MCF 10A (cell line): ENCODE measurements at regions of chr1 and their contacts with region 1.

Region 1: GRCh38 chr1:2141036-2141435 is 53.5 kb downstream of the FAAP20 start:
- DNase-seq: no peak
- H3K4me3 Mint-ChIP-seq: no peak overlapping the region
- H3K27ac Mint-ChIP-seq: no peak overlapping the region
- H3K4me1 Mint-ChIP-seq: no peaks in the 10 kb centered on the region
- H3K27me3 Mint-ChIP-seq: no peaks in the 10 kb centered on the region
- CTCF ChIP-seq: no peak

Region 2: DNA sequence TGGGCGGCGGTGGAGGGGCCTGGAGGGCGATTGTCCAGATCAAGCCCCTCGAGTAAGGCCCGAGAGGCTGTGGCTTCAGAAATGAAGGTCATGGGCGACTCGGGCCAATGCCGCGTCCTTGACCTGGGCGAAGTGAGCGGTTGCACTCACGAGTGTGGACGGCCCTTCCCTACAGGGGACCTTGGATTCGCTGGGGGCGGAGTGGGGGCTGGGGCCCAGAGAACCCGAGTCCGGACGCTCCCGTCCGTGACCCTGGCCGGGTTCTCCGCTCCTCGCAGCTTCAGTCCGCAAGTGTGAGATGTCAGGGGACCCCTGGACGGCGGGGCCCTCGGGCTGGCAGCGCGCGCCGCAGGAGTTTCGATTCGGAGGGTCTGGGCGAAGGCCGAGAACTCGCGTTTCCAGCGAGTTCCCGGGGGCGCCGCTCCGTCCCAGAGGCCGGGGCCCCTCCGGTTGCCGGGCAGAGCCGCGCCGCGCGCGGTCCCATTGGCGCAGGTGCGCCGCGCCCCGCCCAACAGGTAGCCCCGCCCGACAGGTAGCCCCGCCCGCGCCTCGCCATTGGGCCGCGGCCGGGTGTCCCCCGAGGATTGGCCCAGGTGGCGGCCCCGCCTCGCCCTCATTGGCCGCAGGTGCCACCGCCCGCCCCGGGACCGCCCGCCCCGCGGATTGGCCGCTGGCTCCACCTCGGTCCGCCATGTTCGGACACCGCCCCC is 91.2 kb before region 1 on chr1 and contains the start of gene PRKCZ:
- CTCF ChIA-PET with region 1: interaction called, 7 read pairs
- POLR2A ChIA-PET with region 1: no interaction called
- intact Hi-C with region 1: loop called (anchors 2 kb)
- DNase-seq: peak; percentile 90
- H3K4me3 Mint-ChIP-seq: peak within 1 kb of the TSS; percentile 72
- H3K27ac Mint-ChIP-seq: no peak within 1 kb of the TSS
- H3K4me1 Mint-ChIP-seq: peaks cover 11% of the 10 kb centered on the region
- H3K27me3 Mint-ChIP-seq: no peaks in the 10 kb centered on the region
- CTCF ChIP-seq: no peak
- total RNA-seq, gene PRKCZ: 20.3 and 24.9 TPM in 2 replicates

Region 3: GRCh38 chr1:2163205-2163604 is 22.2 kb after region 1 on chr1:
- CTCF ChIA-PET with region 1: interaction called, 14 read pairs
- POLR2A ChIA-PET with region 1: no interaction called
- intact Hi-C with region 1: no loop called
- DNase-seq: no peak
- H3K4me3 Mint-ChIP-seq: no peak overlapping the region
- H3K27ac Mint-ChIP-seq: no peak overlapping the region
- H3K4me1 Mint-ChIP-seq: no peaks in the 10 kb centered on the region
- H3K27me3 Mint-ChIP-seq: no peaks in the 10 kb centered on the region
- CTCF ChIP-seq: no peak

Region 4: DNA sequence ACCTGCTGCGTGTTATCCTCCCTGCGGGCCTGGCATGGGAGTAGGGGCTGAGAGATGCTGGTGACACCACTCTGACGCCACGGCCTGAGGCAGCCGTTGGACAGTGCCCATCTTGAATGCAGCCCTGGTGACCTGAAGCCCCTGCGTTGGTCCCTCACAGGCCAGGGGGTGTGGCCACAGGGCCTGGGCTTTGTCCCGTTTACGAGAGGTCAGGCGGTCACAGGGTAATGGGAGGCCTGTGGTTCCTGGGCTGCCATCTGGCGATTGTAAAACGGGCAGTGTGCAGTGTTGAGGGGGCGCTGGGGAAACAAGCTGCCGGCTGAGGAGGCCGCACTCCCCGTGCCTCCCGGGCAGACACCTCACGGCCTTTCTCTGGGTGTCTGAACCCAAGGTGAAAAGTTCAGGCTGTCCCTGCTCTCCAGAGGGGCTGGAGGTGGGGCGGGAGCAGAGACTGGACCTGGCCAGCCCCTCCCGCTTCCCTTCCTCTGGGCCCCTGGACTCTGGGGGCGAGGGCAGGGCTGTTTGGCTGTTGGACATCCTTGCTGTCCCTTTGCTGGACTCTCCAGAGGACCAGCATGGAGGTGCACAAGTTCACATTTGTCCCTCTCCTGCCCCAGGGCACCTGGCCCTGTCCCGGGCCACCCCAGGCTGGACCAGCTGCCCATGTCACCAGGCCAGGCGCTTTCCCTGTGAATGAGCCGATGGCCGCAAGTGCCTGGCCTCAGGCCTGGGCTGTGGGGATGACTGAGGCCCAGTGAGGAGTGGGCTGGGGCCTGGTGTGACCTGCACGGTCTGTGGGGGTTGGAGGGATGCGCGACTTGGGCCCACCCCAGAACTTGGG is 129.4 kb after region 1 on chr1:
- CTCF ChIA-PET with region 1: no interaction called
- POLR2A ChIA-PET with region 1: no interaction called
- intact Hi-C with region 1: no loop called
- DNase-seq: no peak
- H3K4me3 Mint-ChIP-seq: no peak overlapping the region
- H3K27ac Mint-ChIP-seq: no peak overlapping the region
- H3K4me1 Mint-ChIP-seq: peaks cover 8% of the 10 kb centered on the region
- H3K27me3 Mint-ChIP-seq: no peaks in the 10 kb centered on the region
- CTCF ChIP-seq: no peak